ENCODE measurements at regions of chr18 and their contacts with region 1.

Region 1: DNA sequence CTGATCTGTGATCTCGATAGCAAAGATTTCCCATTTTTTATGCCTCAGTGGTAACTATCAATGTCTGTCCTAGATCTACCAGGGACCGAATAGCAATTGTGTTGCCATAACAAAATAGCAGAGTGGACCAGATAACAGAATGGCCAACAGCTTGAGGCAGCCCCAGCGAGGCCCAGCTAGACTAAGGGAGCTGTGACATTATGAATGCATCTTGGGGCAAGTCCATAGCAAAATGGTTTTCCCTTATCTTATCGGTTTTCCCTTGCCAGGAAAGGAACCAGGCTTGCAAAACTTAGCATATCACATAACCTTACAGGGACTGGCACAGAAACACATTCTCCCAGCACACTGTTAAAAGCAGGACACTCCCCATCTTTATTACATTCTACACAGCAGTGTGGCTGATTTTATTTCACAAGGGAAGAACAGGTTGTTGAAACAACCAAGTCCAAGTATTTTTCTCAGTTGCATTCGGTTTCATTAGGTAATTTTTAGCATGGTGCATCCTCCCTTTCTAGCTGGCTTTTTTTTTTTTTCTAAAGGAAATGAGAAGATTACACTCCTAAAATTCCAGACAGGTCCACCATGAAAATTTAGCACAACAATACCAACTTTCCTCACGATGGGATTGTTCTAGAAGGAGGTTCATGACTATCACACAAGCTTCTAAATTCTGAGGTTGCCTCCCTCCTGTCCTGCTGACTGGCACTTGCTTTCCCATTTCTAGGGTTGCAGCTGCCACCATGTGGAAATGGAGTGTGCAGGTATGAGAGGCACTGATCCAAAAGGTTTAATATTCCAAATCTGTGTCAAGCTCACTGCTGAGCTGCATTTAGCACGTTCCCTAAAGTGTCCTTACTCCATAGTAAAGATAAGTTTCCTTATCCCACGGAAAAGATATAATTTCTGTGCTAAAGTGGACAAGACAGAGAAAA is 97.0 kb upstream of the SLC35G4 start:
- DNase-seq: no peak
- ATAC-seq: peak; percentile 79
- H3K4me3 ChIP-seq: no peak overlapping the region
- H3K27ac ChIP-seq: no peak overlapping the region
- H3K4me1 ChIP-seq: no peaks in the 10 kb centered on the region
- H3K27me3 ChIP-seq: peaks cover 29% of the 10 kb centered on the region; the same call in 1 of the 2 replicates
- CTCF ChIP-seq: peak in 2 of 3 experiments; percentile 27 to 28; a peak in 2 of 6 replicates
- POLR2A ChIP-seq: no peak
- RAD21 ChIP-seq: peak; percentile 65

Region 2: DNA sequence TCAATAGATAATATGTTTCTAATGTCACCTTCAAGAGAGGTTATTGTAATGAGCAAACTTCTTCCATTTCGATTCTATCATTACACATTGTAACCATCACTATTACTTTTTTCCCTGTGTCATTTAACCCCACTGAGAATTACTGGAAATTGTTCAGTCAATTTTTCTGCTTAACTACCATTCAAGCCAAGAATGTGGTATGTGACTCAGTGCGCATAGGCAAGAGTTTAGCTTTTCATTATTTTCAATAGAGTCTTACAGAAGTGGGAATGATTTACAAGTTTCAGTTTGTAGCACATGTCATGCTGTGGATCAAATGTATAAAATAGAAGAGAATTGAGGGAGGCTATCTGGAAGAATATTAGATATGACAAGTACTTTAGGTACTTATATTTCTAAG is 328.7 kb before region 1 on chr18:
- CTCF ChIA-PET with region 1: no interaction called
- POLR2A ChIA-PET with region 1: no interaction called
- RAD21 ChIA-PET with region 1: no interaction called
- intact Hi-C with region 1: no loop called
- DNase-seq: no peak
- ATAC-seq: no peak
- H3K4me3 ChIP-seq: no peak overlapping the region
- H3K27ac ChIP-seq: no peak overlapping the region
- H3K4me1 ChIP-seq: no peaks in the 10 kb centered on the region
- H3K27me3 ChIP-seq: peaks cover 11% of the 10 kb centered on the region; the same call in 1 of the 2 replicates
- CTCF ChIP-seq: no peak
- POLR2A ChIP-seq: no peak
- RAD21 ChIP-seq: no peak

Region 3: GRCh38 chr18:11215216-11215615 is 297.1 kb before region 1 on chr18:
- CTCF ChIA-PET with region 1: no interaction called
- POLR2A ChIA-PET with region 1: no interaction called
- RAD21 ChIA-PET with region 1: no interaction called
- intact Hi-C with region 1: no loop called
- DNase-seq: no peak
- ATAC-seq: no peak
- H3K4me3 ChIP-seq: no peak overlapping the region
- H3K27ac ChIP-seq: no peak overlapping the region
- H3K4me1 ChIP-seq: no peaks in the 10 kb centered on the region
- H3K27me3 ChIP-seq: peaks cover 17% of the 10 kb centered on the region
- CTCF ChIP-seq: no peak
- POLR2A ChIP-seq: no peak
- RAD21 ChIP-seq: no peak

Region 4: GRCh38 chr18:11468617-11469016 is 43.7 kb before region 1 on chr18:
- CTCF ChIA-PET with region 1: no interaction called
- POLR2A ChIA-PET with region 1: no interaction called
- RAD21 ChIA-PET with region 1: no interaction called
- intact Hi-C with region 1: loop called (anchors 5 kb)
- DNase-seq: no peak
- ATAC-seq: no peak
- H3K4me3 ChIP-seq: no peak overlapping the region
- H3K27ac ChIP-seq: no peak overlapping the region
- H3K4me1 ChIP-seq: no peaks in the 10 kb centered on the region
- H3K27me3 ChIP-seq: peaks cover 33% of the 10 kb centered on the region
- CTCF ChIP-seq: no peak
- POLR2A ChIP-seq: no peak
- RAD21 ChIP-seq: no peak

Region 5: DNA sequence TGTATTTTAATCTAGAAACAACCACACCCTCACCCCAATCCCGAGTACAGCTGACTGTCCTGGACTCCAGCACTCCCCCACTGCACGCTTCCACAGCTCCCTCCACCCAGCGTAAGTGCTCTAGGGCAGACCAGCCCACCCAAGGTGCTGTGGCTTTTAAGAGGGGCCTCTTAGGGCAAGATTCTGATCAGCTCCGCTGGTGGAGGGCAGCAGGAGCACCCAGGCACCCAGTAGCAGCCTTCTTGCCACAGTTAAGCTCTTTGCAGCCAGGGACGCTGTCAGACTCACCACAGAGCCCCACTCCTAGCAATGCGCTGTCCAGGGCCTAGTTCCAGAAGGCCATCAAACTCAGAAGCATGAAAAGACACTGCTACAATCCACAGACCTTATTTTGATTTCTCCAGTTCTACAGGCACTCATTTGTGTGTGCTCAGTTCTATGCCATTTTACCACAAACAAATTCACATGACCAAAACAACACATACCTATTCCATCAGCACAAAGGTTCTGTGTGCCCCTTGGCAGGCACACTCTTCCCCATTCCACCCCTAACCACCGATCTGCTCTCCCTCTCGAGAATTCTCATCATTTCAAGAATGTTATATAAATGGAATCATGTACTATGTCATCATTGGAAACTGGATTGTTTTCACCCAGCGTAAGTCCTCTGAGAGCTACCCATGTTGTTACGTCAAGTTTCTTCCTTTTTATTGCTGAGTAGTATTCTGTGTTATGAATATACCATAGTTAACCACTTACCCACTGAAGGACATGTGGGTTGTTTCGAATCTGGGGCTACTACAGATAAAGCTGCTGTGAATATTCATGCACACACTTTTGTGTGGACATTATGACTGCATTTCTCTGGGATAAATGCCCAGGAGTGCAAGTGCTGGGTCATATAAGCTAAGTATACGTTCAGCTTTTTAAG is 1331.3 kb after region 1 on chr18:
- CTCF ChIA-PET with region 1: no interaction called
- POLR2A ChIA-PET with region 1: no interaction called
- RAD21 ChIA-PET with region 1: no interaction called
- intact Hi-C with region 1: no loop called
- DNase-seq: no peak
- ATAC-seq: no peak
- H3K4me3 ChIP-seq: no peak overlapping the region
- H3K27ac ChIP-seq: no peak overlapping the region
- H3K4me1 ChIP-seq: peaks cover under 1% of the 10 kb centered on the region in 2 experiments; a peak in 3 of 4 replicates
- H3K27me3 ChIP-seq: no peaks in the 10 kb centered on the region
- CTCF ChIP-seq: no peak
- POLR2A ChIP-seq: no peak
- RAD21 ChIP-seq: no peak

Measured in HCT116 (cell line).